Head of caudate nucleus (tissue), 42 donors: ENCODE measurements at regions of chr9 and their contacts with region 1.

Region 1: DNA sequence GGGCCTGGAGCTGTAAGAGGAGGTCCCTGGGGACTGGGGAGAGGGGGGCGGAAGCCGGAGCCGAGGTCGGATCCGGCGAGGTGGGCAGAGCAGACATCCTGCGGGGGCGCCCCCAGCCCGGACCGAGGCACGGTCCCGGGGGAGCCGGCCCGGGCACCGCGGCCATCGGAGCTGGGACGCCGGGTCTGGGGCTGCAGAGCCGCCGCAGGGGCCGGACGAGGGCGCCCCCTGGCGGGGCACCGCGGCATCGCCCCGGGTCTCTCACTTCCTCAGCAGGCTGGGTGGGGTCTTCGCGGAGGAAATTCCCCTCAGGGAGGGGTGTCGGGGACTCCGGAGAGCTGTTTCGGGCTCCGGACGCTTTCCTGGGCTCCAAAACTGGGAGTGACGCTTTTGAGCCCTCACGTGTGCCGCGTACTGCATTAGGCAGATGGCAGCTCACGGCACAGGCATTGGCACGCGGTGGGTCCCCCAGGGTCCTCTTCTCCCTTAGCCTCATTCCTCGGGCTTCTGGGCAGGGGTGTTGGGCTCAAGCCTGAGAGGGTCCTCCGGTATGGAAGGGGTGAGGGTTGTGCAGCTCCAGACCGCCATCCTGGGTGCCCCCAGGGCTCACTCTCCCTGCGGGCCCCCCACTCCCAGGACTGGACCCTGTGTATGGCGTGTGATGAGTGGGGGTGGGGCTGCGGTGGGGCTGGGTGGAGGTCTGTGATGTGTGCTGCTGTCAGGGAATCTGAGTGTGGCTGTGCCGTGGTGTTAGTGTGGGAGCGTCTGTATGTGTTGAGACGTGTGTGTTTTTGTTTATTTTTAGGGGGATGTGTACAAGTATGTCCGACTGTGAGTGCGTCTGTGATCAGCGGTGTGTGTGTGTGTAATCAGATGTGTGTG is 29.6 kb downstream of the LHX2 start:
- DNase-seq: peak in 37 of 42 donors; percentile 9 to 83 (median 60)

Region 2: GRCh38 chr9:123399803-123400378 is 641.3 kb before region 1 on chr9:
- intact Hi-C with region 1: loop called (anchors 10 kb)
- DNase-seq: peak in 6 of 42 donors; percentile 43 to 70 (median 58)

Region 3: DNA sequence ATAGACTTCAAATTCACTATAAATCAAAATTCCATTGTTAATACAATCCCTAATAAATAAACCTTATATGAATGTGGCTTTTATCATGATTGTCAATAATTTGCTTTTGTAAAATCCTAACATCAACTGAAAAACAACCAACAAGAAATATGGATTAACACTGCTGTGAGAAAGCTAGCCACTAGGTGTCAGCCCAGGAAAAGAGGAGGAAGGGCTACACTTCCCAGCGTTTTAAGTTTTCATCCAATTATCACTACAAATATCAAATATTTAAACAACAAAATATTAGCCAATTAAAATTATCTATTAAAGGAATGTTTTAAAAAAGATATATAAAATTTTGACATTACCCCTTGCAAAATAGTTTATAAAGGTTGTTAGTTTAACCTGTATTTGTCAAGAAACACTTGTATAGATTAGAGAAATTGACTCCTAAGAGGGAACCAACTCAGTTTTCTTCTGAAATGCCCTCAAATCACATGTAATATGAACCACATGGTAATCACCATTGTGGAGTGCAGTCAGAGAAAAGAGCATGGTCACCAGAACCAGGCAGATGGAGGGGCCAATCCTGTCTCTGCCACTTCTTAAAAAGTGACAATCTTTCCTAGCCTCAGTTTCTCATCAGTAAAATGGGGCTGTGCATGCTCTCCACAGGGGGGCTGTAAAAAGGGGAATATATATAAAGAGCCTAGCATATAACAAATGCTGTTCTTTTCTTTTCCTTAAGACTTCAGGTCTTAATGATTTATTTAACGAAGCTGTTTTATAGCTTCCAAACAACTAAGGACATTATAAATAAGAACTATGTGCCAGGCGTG is 497.0 kb before region 1 on chr9:
- intact Hi-C with region 1: loop called (anchors 10 kb)
- DNase-seq: peak in 25 of 42 donors; percentile 20 to 78 (median 39)